ENCODE measurements at regions of chr12 and their contacts with region 1.

Region 1: DNA sequence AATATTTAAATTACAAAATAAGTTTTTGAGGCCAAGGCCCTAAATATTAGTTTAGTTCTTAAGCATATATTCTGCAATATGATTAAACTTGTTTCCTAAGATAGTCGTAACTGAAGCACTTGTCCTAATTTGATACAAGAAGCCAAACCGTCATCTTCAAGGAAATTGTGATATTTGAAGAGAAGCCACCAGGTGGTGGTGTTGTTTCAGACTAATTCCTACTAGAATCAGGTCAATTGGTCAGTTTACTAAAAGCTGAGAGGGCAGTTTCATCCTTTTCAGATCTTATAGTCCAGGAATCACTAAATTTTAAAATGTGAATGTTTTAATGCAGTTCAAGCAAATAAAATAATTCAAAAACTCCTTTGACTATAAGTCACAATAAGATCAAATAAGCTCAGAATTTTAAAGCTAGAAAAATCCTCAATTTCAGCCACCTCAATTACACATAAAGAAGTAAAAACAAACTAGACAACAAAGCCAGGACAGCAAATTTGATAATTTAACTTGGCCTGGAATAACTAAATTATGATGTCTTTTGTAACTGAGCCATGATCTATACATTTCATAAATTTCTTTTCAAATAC is 7.1 kb upstream of the ARL1 start:
- ATAC-seq: peak in 4 of 8 experiments; percentile 36 to 67 (median 58)
- H3K4me3 ChIP-seq: no peak overlapping the region
- H3K27ac ChIP-seq: no peak overlapping the region
- H3K4me1 ChIP-seq: no peaks in the 10 kb centered on the region

Region 2: DNA sequence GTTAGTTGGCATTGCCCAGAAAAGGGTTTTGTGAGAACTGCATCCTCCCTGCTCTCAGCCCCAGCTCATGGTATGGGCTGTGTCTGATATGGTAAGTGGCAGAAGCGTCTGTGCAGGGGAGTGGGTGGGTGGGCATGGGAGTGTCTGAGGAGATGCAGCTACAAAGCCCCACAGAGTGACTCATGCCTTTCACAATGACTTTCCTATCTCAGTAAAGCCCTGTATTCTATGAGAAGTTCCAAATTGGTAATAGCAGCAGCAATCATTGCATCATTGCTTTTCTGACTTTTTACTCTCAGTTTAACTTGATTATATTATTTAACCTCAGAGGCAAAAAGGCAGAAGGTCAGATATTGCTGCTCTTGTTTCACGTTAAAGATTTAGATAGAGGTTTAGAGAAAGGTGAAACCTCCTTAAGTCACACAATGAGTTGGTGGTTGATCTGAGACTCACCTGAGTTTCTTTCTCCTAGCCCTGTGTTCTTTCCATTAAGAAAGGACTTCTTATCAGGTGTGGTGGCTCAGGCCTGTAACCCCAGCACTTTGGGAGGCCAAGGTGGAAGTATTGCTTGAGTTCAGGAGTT is 376.2 kb before region 1 on chr12:
- in situ Hi-C with region 1: no loop called
- ATAC-seq: peak in 6 of 8 experiments; percentile 28 to 74 (median 41)
- H3K4me3 ChIP-seq: no peak overlapping the region
- H3K27ac ChIP-seq: no peak overlapping the region
- H3K4me1 ChIP-seq: no peaks in the 10 kb centered on the region

Region 3: DNA sequence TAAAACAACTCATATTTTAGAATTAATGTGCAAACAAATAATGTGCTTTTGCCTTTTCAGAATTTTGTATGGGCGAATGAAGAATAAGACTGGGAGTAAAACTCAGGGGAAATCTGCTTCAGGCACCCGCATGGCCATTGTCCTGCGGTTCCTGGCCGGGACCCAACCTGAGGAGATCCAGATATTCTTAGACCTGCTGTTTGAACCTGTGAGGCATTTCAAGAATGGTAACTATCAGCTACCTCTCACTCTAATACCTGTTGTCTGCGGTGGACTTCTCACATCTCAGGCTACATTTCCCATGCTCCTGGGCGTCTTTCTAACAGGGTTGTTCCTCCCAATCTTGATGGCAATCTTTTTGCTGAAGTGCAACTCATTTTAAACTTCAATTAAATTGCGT is 87.6 kb before region 1 on chr12:
- in situ Hi-C with region 1: no loop called
- ATAC-seq: no peak
- H3K4me3 ChIP-seq: no peak overlapping the region
- H3K27ac ChIP-seq: no peak overlapping the region
- H3K4me1 ChIP-seq: no peaks in the 10 kb centered on the region

Region 4: DNA sequence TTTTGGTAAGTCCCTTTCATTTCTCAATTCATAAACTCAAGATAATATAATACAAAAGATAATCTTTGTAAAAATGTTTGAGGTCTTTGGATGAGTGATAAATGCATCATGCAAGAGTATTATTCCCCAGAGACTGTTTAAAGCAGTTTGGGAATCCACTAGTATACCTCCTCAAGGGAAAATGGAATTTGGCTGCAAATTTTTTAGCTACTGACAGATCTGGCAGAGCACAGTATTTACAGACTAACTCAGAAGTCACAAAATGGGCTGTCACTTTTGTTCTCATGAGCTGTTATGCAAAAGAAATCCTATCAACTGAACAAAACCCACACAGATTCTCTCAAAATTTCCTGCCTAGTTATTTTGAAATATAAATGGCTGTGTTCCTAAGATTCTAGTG is 70.4 kb after region 1 on chr12:
- in situ Hi-C with region 1: loop called in 1 of 9 experiments (anchors 10 kb)
- ATAC-seq: no peak
- H3K4me3 ChIP-seq: no peak overlapping the region
- H3K27ac ChIP-seq: no peak overlapping the region
- H3K4me1 ChIP-seq: no peaks in the 10 kb centered on the region

Region 5: DNA sequence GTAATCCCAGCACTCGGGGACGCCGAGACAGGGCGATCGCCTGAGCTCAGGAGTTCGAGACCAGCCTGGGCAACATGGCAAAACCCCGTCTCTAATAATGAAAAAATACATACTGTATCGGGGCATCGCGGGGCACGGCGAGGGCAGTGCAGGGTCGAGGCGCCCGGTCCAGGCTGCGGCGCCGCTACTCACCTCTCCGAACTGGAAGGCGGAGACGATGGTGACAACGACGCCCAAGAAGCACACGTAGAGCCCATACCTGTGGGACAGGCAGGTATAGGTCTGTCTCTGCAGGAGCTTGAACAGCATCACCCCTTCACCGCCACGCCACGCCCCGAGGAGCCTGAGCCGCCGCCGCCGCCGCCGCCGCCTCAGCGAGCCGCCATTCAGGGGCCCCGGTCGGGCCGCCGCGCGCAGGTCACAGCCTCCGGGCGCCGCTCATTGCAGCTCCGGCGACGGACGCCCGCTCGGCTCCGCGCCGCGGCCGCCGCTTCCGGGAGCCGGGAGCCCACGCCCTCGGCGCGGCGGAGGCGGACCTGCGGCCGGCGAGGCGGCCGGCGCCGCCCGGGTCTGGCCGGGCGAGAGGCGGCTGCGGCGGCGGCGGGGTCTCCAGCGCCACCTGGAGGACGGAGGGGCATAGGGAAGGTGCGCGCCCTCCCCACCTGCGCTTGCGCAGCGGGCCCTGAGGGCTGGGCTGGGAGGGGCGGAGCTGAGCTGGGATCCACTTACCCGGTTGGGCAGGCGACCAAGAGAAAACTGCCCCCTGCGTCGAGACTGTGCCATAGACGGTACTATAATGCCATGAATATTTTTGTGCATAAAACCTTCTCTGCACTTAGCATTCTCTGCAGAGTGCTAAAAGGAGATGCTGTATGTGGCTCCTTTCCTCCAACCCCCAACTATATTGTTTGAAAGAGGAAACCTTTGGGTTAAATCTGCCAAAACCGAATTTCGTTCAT is 416.0 kb after region 1 on chr12 and contains the start of gene GNPTAB:
- in situ Hi-C with region 1: loop called in 2 of 9 experiments (anchors 10 to 25 kb)
- ATAC-seq: peak; percentile 92 to 97 (median 95)
- H3K4me3 ChIP-seq: peak within 1 kb of the TSS; percentile 80 to 92 (median 89)
- H3K27ac ChIP-seq: peak within 1 kb of the TSS; percentile 71 to 78
- H3K4me1 ChIP-seq: peaks cover 0 to 3% of the 10 kb centered on the region in 2 donors
- total RNA-seq, gene GNPTAB: 15.2 to 49.0 (median 41.5) TPM

Measured in motor neuron (in vitro differentiated cells).